ENCODE measurements at regions of chrX and their contacts with region 1.

Region 1: GRCh38 chrX:8773117-8773516 is 28.1 kb downstream of the FAM9A start:
- DNase-seq: no peak

Region 2: DNA sequence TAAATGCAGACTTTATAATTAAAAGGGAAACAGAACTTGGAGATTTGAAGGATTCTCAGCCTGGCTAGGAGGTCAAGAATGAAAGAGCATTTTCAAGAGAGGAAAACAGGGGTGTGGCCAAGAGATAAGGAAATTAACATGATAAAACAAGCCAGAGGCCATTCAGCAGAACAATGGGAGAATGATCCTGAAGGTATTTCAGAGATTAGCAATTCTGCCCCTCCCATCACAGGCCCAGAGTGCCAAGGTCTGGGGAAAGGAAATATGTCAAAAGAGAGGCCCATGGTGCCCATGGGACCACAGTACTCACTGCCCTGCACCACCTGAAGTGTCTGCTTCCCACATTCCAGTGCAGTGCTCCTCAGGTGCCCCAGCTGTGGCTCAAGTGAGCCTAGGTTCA is 1814.1 kb before region 1 on chrX:
- intact Hi-C with region 1: no loop called
- DNase-seq: no peak

Region 3: GRCh38 chrX:9141496-9141895 is 368.4 kb after region 1 on chrX:
- intact Hi-C with region 1: loop called in 1 of 2 experiments (anchors 5 kb)
- DNase-seq: no peak

Measured in posterior vena cava (tissue), 2 donors.